ENCODE measurements at regions of chr4 and their contacts with region 1.

Region 1: GRCh38 chr4:52665592-52665991 is 6.5 kb upstream of the USP46 start:
- DNase-seq: no peak
- H3K4me3 Mint-ChIP-seq: no peak overlapping the region
- H3K27ac Mint-ChIP-seq: no peak overlapping the region
- H3K4me1 Mint-ChIP-seq: peaks cover 11% of the 10 kb centered on the region
- H3K27me3 Mint-ChIP-seq: peaks cover 8% of the 10 kb centered on the region

Region 2: GRCh38 chr4:52376132-52376704 is 289.4 kb before region 1 on chr4:
- CTCF ChIA-PET with region 1: no interaction called
- POLR2A ChIA-PET with region 1: no interaction called
- intact Hi-C with region 1: loop called (anchors 1 kb)
- DNase-seq: no peak
- H3K4me3 Mint-ChIP-seq: no peak overlapping the region
- H3K27ac Mint-ChIP-seq: no peak overlapping the region
- H3K4me1 Mint-ChIP-seq: no peaks in the 10 kb centered on the region
- H3K27me3 Mint-ChIP-seq: peaks cover 6% of the 10 kb centered on the region